Right ventricle myocardium inferior (tissue), 1 donor: ENCODE measurements at regions of chr1 and their contacts with region 1.

Region 1: GRCh38 chr1:111990878-111991718 is 1.6 kb upstream of the KCND3 start:
- DNase-seq: peak; percentile 85
- ATAC-seq: peak; percentile 74

Region 2: DNA sequence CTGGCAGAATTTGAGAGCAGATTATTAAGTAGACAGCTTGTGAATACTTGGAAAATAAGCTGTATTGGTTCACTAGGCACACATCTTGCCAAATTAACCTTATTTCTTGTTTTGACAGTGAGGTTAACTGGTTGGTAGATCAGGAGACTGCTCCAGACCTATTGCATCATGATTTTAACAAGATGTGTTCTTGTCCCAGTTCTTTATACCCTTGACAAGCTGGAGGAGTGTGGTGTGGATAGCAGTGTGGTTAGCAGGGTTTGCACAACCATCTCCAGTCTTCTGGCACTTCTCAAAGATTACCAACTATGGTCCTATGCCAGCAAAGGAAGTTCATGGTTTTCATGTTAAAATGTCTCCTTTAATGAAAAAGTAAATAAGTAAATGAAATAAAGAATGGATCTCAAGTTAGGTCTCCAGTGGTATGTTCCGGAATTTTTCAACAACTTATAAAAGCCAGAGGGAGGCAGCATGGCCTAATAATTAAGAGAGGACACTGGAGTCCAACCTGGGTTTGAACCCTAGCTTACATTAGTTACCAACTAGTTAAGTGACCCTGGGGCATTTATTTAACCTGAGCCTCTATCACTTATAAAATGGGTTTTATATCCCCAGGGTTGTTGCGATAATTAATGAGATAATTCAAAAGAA is 201.3 kb before region 1 on chr1:
- intact Hi-C with region 1: loop called (anchors 5 kb)
- DNase-seq: no peak
- ATAC-seq: peak; percentile 85

Region 3: GRCh38 chr1:111856411-111857185 is 134.5 kb before region 1 on chr1:
- intact Hi-C with region 1: loop called (anchors 5 kb)
- DNase-seq: no peak
- ATAC-seq: peak; percentile 9

Region 4: GRCh38 chr1:111894497-111894896 is 96.6 kb before region 1 on chr1:
- intact Hi-C with region 1: no loop called
- DNase-seq: no peak
- ATAC-seq: no peak

Region 5: GRCh38 chr1:111904478-111905218 is 86.5 kb before region 1 on chr1:
- intact Hi-C with region 1: loop called (anchors 5 kb)
- DNase-seq: no peak
- ATAC-seq: peak; percentile 92

Region 6: DNA sequence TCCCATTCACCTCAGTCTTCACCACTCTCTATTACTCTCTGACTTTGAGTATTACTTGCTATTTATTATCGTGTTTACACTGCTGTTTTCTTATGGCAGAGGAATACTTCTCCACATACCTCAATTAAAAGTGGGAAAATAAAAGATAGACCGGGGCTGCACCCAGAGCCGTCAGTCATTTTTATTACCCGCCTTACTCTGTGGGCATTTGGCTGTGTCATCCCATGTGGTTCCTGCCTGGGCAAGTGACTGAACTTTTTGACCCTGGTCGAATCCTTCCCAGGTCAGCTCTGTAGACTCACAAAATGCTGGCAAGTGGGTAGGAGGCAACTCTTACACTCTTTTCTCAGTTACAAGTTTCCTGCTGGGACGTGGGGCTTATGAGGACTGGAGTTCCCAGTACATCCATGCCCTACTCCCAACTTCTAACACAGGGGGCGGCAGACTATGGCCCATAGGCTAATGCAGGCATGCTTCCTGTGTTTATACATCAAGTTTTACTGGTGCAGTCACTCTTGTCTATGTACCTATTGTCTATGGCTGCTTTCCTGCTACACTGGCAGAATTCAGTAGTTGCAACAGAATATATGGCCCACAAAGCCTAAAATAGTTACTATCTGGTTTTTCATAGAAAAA is 67.8 kb after region 1 on chr1:
- intact Hi-C with region 1: loop called (anchors 2 kb)
- DNase-seq: no peak
- ATAC-seq: no peak

Region 7: DNA sequence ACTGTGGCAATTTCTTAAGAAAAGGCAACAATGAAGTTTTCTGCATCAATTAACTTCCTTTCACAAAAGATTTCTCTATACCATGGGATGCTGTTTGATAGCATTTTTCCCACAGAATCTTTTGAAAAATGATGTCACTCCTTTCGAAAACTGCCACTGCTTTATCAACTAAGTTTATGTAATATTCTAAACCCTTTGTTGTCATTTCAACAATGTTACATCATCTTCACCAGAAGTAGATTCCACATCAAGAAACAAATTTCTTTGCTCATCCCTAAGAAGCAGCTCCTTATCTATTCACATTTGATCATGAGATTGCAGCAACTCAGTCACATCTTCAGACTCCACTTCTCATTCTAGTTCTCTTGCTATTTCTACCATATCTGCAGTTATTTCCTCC is 114.5 kb after region 1 on chr1:
- intact Hi-C with region 1: no loop called
- DNase-seq: no peak
- ATAC-seq: no peak

Region 8: DNA sequence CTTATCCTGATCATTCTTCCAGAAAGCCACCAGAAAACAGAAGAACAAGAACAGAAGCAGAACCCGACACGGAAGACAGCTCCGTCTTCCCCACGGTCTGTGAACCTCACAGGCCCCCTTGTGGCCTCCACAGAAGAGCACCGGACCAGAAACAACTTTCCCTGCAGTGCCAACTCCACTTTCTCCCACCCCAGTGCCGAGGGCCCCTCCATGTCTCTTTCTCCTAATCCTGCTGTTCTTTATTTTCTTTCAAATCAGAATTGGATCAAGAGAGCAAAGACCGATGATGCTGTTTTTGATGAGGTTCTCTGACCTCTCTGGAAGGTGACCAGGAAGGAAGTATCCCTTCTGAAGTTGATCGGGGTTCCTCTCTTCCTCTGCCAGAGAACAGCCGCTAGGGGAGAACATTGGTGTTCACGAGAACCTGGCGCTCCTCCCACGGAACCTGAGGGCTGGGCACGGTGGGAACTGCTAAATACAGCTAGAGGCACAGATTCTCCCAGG is 346.0 kb after region 1 on chr1:
- intact Hi-C with region 1: loop called (anchors 2 kb)
- DNase-seq: peak; percentile 72
- ATAC-seq: peak; percentile 88